Common myeloid progenitor, CD34-positive (primary cell): ENCODE measurements at regions of chr21 and their contacts with region 1.

Region 1: DNA sequence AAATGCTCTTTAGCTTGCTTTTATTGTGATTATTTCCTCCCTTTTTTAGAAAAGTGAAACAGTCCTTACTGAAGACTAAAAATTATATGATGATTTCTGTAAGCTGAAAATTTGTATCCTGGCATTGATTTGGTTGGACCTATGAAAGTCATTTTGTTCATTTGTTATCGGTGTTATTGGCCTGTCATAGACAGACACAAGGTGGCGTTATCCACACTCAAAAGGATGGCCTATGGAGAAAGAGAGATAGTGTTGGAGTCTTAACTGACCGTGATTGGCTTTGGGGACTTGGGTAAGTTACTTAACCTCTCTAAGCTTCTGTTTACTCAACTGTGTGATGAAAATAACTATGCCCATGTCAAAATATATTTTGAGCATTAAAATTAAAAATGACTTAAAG is 203.6 kb upstream of the CHODL start:
- DNase-seq: peak; percentile 46 to 63 (median 57)
- H3K4me3 ChIP-seq: no peak overlapping the region
- H3K27ac ChIP-seq: no peak overlapping the region
- H3K4me1 ChIP-seq: no peaks in the 10 kb centered on the region
- H3K27me3 ChIP-seq: no peaks in the 10 kb centered on the region

Region 2: DNA sequence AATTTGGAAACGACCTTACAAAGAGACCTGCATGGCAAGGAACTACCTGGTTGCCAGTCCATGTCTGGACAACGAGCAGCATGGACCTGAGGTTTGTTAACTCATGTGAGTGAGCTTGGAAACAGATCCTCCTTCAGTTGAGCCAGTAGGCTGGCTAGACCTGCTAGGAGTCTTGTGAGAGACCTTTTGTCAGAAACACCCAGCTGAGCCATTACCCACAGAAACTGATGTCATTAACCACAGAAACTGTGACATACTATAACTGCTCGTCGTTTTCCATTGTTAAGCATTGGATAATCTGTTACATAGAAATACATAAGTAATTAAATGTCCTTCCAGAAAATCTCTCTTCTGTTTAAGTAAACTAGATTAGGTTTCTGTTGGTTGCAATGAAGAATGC is 10.8 kb before region 1 on chr21:
- CTCF ChIA-PET with region 1: interaction called, 22 read pairs
- POLR2A ChIA-PET with region 1: no interaction called
- DNase-seq: peak in 1 of 3 donors; percentile 8
- H3K4me3 ChIP-seq: no peak overlapping the region
- H3K27ac ChIP-seq: no peak overlapping the region
- H3K4me1 ChIP-seq: no peaks in the 10 kb centered on the region
- H3K27me3 ChIP-seq: no peaks in the 10 kb centered on the region

Region 3: DNA sequence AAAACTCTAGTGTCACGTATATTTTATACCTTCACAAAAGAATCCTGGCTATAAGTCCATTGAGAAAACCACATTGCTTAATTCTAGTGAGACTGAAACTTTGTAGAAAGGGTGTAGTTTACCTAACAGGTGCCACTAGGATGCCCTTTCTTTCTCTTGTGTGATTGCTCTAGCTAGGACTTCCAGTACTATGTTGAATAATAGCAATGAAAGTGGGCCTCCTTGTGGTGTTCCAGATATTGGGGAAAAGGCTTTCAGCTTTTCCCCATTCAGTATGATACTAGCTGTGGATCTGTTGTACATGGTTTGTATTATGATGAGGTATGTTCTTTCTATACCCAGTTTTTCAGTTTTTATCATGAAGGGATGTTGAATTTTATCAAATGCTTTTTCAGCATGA is 163.9 kb after region 1 on chr21:
- CTCF ChIA-PET with region 1: interaction called, 17 read pairs
- POLR2A ChIA-PET with region 1: no interaction called
- DNase-seq: peak in 2 of 3 donors; percentile 35
- H3K4me3 ChIP-seq: no peak overlapping the region
- H3K27ac ChIP-seq: no peak overlapping the region
- H3K4me1 ChIP-seq: no peaks in the 10 kb centered on the region
- H3K27me3 ChIP-seq: no peaks in the 10 kb centered on the region